Heart right ventricle (tissue), 16 donors: ENCODE measurements at regions of chr17 and their contacts with region 1.

Region 1: DNA sequence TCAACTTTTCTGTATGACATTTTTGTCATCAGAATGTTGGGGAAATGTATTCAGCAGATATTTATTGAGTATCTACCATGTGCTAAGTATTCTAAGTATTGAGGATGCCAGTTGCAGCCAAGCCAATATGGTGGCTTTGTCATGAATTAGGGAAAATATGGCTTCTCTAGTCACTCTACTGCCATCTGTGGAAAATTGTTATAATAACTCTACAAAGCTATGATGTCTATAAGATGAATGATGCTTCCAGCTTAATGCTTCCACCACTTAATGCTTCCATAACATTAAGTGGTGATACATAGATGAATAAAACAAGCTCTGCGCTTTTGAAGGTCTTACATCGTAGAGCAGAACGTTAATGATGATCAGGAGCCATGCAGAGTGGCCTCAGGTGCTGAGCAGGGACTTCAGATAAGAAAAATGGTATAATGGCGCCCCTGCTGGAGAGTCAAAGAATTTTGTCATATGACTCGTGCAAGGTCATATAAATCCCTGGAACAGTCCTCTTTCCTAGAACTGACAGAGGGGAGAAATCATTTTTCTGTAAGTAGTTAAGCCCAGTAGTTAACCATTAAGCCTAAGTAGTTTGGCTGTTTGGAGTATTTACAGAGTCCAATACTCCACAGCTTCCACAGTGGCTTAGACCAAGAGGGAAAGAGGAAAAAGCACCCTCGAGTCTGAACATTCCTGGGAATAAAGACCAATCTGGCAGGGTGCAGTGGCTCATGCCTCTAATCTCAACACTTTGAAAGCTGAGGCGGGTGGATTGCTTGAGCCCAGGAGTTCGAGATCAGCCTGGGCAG is 2.7 kb upstream of the TMIGD1 start:
- DNase-seq: peak in 1 of 2 donors; percentile 9
- ATAC-seq: no peak
- H3K4me3 ChIP-seq: no peak overlapping the region
- H3K27ac ChIP-seq: no peak overlapping the region
- H3K4me1 ChIP-seq: peaks cover 0 to 31% (median 17%) of the 10 kb centered on the region in 9 donors
- H3K27me3 ChIP-seq: no peaks in the 10 kb centered on the region
- CTCF ChIP-seq: peak; percentile 28 to 59 (median 51)

Region 2: GRCh38 chr17:30104575-30105339 is 231.8 kb before region 1 on chr17:
- intact Hi-C with region 1: loop called in 5 of 10 experiments (anchors 5 to 10 kb)
- DNase-seq: peak; percentile 54 to 84
- ATAC-seq: peak; percentile 92 to 99 (median 97)
- H3K4me3 ChIP-seq: peak overlapping the region in 9 of 10 donors; percentile 25 to 50 (median 48)
- H3K27ac ChIP-seq: peak overlapping the region in 5 of 10 donors; percentile 9 to 51 (median 35)
- H3K4me1 ChIP-seq: peaks cover 0 to 14% (median 0%) of the 10 kb centered on the region in 9 donors
- H3K27me3 ChIP-seq: no peaks in the 10 kb centered on the region
- CTCF ChIP-seq: peak; percentile 73 to 96 (median 92)

Region 3: GRCh38 chr17:30116661-30117551 is 219.7 kb before region 1 on chr17 and contains the start of gene NSRP1:
- intact Hi-C with region 1: loop called in 3 of 10 experiments (anchors 5 to 10 kb)
- DNase-seq: peak; percentile 96
- ATAC-seq: peak; percentile 96 to 100 (median 99)
- H3K4me3 ChIP-seq: peak within 1 kb of the TSS; percentile 60 to 85 (median 71)
- H3K27ac ChIP-seq: peak within 1 kb of the TSS; percentile 88 to 98 (median 94)
- H3K4me1 ChIP-seq: peaks cover 3 to 48% (median 29%) of the 10 kb centered on the region in 9 donors
- H3K27me3 ChIP-seq: no peaks in the 10 kb centered on the region
- CTCF ChIP-seq: no peak
- total RNA-seq, gene NSRP1: 22.2 to 39.1 (median 26.5) TPM

Region 4: GRCh38 chr17:30124273-30124796 is 212.2 kb before region 1 on chr17:
- intact Hi-C with region 1: loop called in 3 of 10 experiments (anchors 5 to 10 kb)
- DNase-seq: no peak
- ATAC-seq: no peak
- H3K4me3 ChIP-seq: no peak overlapping the region
- H3K27ac ChIP-seq: no peak overlapping the region
- H3K4me1 ChIP-seq: peaks cover 0 to 45% (median 17%) of the 10 kb centered on the region in 9 donors
- H3K27me3 ChIP-seq: no peaks in the 10 kb centered on the region
- CTCF ChIP-seq: no peak

Region 5: DNA sequence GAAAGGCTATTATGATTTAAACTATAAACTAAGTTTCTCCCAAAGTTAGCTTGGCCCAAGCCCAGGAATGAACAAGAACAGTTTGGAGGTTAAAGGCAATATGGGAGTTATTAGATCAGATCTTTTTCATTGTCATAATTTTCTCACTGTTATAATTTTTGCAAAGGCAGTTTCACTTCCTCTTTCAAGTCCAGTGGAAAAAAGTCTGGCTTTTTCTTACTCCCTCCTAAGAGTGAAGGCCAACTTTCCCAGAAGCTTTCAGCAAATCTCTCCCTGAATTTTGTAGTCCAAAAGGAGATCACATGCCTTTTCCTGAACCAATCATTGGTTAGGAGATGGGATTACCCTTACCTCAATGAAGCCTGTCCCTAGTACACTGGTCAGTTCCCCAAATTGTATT is 35.8 kb before region 1 on chr17:
- intact Hi-C with region 1: loop called in 1 of 10 experiments (anchors 5 kb)
- DNase-seq: no peak
- ATAC-seq: no peak
- H3K4me3 ChIP-seq: no peak overlapping the region
- H3K27ac ChIP-seq: no peak overlapping the region
- H3K4me1 ChIP-seq: no peaks in the 10 kb centered on the region
- H3K27me3 ChIP-seq: peaks cover 0 to 6% (median 0%) of the 10 kb centered on the region in 7 donors
- CTCF ChIP-seq: no peak